ENCODE measurements at regions of chr1 and their contacts with region 1.

Region 1: DNA sequence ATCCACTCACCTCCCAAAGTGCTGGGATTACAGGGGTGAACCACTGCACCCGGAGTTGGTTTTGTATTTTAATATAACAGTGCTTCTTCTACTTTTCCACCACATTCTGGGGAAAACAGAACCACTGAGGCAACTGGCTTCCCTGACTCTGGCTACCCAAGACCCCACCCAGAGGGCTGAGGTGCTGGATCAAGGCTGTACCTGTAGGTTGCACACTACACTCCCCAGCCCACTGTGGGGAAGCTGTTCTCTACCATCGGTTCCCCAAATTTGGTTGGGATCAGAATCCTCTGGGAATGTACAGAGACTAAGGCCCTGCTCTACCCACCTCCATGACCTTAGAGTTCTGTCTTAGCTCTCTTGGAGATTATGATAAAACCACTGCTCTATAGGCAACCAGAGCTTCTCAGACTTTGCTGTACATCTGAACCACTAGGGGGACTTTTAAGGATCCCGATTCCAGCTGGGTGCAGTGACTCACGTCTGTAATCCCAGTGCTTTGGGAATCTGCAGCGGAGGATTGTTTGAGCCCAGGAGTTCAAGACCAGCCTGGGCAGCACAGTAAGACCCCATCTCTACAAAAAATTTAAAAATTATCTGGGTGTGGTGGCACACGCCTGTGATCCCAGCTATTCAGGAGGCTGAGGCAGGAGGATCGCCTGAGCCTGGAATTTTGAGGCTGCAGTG is 51.6 kb downstream of the GNG4 start:
- DNase-seq: peak; percentile 18
- H3K4me3 ChIP-seq: no peak overlapping the region
- H3K27ac ChIP-seq: no peak overlapping the region
- H3K4me1 ChIP-seq: no peaks in the 10 kb centered on the region
- H3K27me3 ChIP-seq: no peaks in the 10 kb centered on the region
- CTCF ChIP-seq: peak; percentile 28 to 36
- POLR2A ChIP-seq: no peak

Region 2: GRCh38 chr1:235513495-235514366 is 84.3 kb before region 1 on chr1:
- CTCF ChIA-PET with region 1: interaction called, 17 read pairs
- POLR2A ChIA-PET with region 1: no interaction called
- dilution Hi-C with region 1: no loop called
- intact Hi-C with region 1: loop called (anchors 5 kb)
- DNase-seq: peak; percentile 72
- H3K4me3 ChIP-seq: no peak overlapping the region
- H3K27ac ChIP-seq: no peak overlapping the region
- H3K4me1 ChIP-seq: no peaks in the 10 kb centered on the region
- H3K27me3 ChIP-seq: no peaks in the 10 kb centered on the region
- CTCF ChIP-seq: peak; percentile 68 to 74
- POLR2A ChIP-seq: no peak

Region 3: GRCh38 chr1:235614442-235614954 is 16.5 kb after region 1 on chr1:
- CTCF ChIA-PET with region 1: interaction called, 24 read pairs
- POLR2A ChIA-PET with region 1: no interaction called
- dilution Hi-C with region 1: no loop called
- intact Hi-C with region 1: no loop called
- DNase-seq: no peak
- H3K4me3 ChIP-seq: no peak overlapping the region
- H3K27ac ChIP-seq: no peak overlapping the region
- H3K4me1 ChIP-seq: no peaks in the 10 kb centered on the region
- H3K27me3 ChIP-seq: peaks cover 0 to 2% of the 10 kb centered on the region in 2 experiments
- CTCF ChIP-seq: no peak
- POLR2A ChIP-seq: no peak

Region 4: DNA sequence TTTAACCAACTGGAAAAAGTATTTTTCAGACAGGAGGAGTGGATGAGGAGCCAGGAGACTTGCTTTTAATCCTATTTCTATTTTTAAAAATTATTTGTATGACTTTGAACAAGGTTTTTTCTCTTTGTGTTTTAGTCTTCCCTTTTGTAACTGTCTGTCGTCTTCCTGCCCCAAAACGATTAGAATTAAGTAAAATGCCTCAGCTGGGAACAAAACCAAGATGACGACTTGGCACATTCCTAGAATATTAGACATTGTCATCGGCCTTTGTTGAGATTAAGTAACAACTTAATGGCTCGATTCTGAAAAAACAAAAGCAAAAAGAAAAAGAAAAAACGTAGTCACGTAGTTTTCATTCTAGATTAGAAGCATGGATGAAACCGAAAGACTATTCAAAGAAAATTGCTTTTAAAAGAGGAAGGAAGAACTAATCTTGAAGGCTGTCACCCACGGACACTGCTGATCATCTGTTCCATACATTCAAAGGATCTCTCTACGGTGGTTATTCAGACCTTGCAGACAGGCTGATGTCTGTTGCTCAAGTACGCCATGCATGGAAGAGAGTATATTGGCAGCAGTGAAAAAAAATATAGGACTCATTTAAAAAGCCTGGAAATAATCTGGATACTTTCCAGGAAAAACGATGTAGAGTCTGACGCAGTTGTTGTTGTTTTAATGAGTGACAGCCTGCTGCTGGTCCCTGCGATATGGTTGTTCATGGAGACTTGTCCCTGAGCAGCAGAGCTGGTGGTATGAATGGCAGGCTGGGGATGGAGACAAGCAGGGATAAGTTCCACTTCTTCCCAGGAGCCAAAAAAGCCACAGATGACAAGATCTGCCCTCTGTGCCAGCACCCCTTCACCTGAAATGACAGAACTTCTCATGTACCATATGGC is 34.7 kb after region 1 on chr1:
- CTCF ChIA-PET with region 1: interaction called, 13 read pairs
- POLR2A ChIA-PET with region 1: no interaction called
- dilution Hi-C with region 1: no loop called
- intact Hi-C with region 1: no loop called
- DNase-seq: peak; percentile 80
- H3K4me3 ChIP-seq: peak overlapping the region in 2 of 3 experiments; percentile 21 to 62
- H3K27ac ChIP-seq: no peak overlapping the region
- H3K4me1 ChIP-seq: peaks cover 2% of the 10 kb centered on the region
- H3K27me3 ChIP-seq: peaks cover 0 to 2% of the 10 kb centered on the region in 2 experiments
- CTCF ChIP-seq: no peak
- POLR2A ChIP-seq: no peak

Region 5: DNA sequence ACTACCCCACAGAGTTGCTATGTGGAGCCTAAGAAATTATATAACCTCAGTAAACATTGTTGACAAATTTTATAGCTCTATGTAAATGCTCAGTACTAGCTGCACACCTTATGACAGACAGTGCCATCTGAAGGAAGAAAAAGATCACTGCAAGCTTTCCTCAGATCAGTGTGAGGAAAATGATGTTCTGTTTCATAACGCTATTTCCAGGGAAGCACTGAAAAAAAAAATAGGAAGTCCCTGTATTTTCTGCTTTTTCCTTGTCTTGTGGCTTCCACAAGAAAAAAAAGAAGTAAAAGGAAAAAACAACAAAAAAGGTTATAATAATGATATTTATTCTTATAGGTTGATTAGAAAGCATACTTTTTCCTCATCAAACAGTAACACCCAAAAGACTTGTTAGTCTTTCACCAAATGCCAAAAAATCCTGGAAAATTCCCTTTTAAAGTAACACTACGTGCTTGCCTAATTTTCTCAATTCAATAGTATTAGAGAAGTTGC is 245.5 kb after region 1 on chr1:
- CTCF ChIA-PET with region 1: interaction called, 11 read pairs
- POLR2A ChIA-PET with region 1: no interaction called
- dilution Hi-C with region 1: no loop called
- intact Hi-C with region 1: no loop called
- DNase-seq: peak; percentile 24
- H3K4me3 ChIP-seq: no peak overlapping the region
- H3K27ac ChIP-seq: no peak overlapping the region
- H3K4me1 ChIP-seq: no peaks in the 10 kb centered on the region
- H3K27me3 ChIP-seq: no peaks in the 10 kb centered on the region
- CTCF ChIP-seq: peak in 1 of 2 donors; percentile 16
- POLR2A ChIP-seq: no peak